Right ventricle myocardium inferior (tissue), 1 donor: ENCODE measurements at regions of chr5 and their contacts with region 1.

Region 1: DNA sequence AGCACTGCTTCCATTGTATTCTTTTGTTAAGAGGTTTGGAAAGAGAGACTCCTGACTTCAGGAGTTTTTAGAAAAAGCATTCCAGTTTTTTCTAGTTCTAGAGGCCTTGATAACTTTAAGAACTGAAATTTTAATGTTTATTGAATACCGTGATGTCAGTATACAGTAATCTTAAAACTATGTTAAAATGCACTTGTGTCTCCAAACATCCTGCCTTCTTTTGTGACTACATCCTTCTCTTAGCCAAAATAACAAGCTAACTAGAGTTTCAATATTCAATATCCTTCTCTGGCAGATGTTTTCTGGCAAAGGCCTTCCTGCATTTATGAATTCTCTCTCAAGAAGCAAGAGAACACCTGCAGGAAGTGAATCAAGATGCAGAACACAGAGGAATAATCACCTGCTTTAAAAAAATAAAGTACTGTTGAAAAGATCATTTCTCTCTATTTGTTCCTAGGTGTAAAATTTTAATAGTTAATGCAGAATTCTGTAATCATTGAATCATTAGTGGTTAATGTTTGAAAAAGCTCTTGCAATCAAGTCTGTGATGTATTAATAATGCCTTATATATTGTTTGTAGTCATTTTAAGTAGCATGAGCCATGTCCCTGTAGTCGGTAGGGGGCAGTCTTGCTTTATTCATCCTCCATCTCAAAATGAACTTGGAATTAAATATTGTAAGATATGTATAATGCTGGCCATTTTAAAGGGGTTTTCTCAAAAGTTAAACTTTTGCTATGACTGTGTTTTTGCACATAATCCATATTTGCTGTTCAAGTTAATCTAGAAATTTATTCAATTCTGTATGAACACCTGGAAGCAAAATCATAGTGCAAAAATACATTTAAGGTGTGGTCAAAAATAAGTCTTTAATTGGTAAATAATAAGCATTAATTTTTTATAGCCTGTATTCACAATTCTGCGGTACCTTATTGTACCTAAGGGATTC is 43.1 kb downstream of the NDFIP1 start:
- DNase-seq: no peak
- ATAC-seq: peak; percentile 73

Region 2: GRCh38 chr5:142063878-142064331 is 87.8 kb before region 1 on chr5:
- intact Hi-C with region 1: no loop called
- DNase-seq: peak; percentile 84
- ATAC-seq: peak; percentile 86

Region 3: GRCh38 chr5:142215915-142216681 is 64.4 kb after region 1 on chr5:
- intact Hi-C with region 1: no loop called
- DNase-seq: peak; percentile 86
- ATAC-seq: peak; percentile 94

Region 4: DNA sequence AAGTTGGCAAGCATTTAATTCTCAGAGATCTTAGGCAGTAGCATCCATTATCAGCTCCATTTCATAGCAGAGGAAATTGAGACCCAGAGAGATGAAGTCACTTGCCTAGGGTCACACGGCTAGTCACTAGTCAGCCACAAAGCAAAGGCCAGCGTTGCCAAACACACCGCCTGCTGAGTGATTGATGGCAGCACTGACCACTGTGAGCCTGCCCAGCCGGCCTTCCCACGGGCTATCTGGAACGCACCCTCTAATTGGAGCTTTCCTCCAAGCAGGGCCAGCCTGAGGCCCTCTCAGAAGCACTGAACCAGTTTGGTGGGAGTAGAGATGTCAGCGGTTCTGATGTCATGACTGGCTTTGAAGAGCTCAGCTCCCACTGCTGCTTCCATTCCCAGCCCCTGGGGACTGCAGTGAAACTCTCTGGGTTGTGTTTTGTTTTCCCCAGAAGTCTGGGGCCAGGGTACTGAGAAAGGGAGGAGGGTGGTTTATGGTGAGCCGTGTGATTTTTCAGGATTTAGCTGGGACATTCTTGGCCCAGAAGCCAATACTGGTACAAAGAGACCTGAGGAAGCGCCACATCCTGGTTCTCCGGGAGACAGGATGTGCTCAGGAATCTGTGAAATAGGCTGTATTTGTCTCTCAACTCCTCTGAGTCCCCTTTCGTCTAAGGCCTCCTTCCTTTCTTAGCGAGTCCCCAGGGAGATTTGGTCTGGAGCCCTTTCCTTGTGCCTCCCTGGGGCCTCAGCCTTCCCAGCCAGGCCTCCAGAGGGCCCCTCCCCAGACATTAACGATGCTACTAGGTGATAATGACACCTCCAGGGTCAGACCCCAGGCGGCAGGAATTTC is 128.6 kb after region 1 on chr5:
- intact Hi-C with region 1: loop called (anchors 10 kb)
- DNase-seq: peak; percentile 83
- ATAC-seq: peak; percentile 88

Region 5: DNA sequence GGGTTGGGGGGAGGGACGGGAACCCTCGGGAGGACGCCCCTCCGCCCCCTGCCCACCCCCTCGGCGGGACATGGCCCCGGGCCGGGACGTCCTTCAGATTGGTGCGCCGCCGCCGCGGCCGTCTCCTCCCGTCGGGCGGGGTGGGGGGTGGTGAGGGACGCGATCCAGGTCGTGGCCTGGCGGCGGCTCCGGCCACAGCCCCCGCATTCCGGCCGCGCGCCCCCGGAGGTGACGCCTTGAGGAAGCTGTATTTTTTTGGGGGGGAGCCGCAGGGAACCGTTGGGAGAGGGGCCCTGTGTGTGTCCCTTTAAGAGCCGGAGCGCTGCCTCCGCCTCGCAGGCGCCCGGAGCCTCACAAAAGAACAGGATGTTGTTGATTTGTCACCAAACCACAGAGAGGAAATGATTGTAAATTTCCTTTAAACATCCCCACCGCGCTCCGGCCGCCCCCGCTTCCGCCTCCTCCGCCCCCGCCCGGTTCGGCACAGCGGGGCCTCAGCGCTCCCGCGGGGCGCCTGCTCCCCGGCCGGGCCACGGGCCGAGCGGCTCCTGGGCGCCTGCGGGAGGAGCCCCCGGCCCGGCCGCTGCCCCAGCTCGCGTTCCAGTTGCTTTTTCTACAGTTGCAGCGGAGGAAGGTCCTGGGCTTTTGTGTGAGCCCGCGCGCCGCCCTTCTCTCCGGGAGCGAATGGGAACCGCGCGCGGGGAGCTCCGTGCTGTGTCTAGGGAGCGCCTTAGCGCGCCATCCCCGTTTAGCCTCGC is 205.2 kb after region 1 on chr5:
- intact Hi-C with region 1: loop called (anchors 10 kb)
- DNase-seq: peak; percentile 94
- ATAC-seq: peak; percentile 86

Region 6: DNA sequence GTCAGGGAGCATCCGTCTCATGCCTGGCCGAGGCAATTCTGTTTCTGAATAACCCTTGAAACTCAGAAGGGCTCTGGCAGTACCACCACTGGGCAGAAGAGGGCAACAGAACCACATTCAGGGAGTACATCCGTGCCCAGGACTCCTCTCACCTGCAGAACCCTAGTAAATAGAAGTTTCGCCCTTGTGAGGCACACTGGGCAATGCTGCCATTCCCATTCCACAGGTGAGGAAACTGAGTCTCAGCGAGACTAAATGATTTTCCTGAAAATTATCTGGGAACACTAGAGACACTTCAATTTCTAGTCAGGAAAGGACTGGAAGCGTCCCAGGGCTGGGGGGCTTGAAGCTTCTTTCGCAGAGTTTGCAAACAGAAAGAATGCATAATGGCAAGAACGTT is 459.4 kb after region 1 on chr5:
- intact Hi-C with region 1: loop called (anchors 5 kb)
- DNase-seq: no peak
- ATAC-seq: peak; percentile 87

Region 7: GRCh38 chr5:142699184-142699720 is 547.5 kb after region 1 on chr5:
- intact Hi-C with region 1: loop called (anchors 5 kb)
- DNase-seq: peak; percentile 89
- ATAC-seq: peak; percentile 90